ENCODE measurements at regions of chr11 and their contacts with region 1.

Region 1: DNA sequence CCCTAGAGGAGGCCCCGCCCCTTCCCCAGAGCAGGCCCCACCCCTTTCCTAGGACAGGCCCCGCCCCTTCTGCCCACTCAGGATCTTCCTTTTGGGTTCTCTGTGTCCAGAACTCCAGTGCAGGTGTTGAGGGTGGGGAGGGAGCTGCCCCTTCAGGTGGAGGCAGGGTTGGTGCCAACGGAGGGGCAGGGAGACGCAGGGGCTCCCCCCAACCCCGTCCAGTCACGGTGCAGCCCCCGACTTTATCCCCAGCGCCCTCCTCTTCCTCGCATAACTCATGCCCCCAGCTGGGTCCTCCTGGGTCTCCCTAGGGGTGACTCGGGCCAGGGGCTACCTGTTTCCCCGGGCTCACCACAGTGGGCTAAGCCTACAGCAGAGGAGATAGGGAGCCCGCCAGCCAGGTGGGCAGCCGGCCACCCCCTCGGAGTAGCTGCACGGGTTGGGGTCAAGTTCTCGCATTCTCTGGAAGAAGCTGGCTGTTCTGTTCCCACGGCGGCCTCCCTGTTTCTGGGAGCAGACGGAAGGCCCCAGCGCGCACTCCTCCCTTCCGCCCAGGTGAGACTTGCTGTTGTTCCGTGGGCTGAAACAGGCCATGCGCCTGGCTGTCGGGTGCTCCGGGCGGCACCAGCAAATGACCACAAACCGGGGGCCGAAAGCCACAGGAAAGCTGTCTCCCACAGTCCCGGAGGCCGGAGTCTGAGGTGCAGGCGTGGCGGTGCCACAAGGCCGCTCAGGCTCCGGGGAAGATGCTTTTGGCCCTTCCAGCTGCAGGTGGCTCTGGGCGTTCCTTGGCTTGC is 38.9 kb downstream of the MUC2 start:
- DNase-seq: no peak
- ATAC-seq: no peak
- H3K4me3 ChIP-seq: no peak overlapping the region
- H3K27ac ChIP-seq: 0 out of 2 replicates have a peak overlapping the region, but pooled peaks have one; percentile 11
- H3K4me1 ChIP-seq: no peaks in the 10 kb centered on the region
- H3K27me3 ChIP-seq: no peaks in the 10 kb centered on the region
- CTCF ChIP-seq: no peak

Region 2: GRCh38 chr11:1029654-1030053 is 83.9 kb before region 1 on chr11:
- CTCF ChIA-PET with region 1: no interaction called
- POLR2A ChIA-PET with region 1: no interaction called
- intact Hi-C with region 1: no loop called
- DNase-seq: no peak
- ATAC-seq: no peak
- H3K4me3 ChIP-seq: no peak overlapping the region
- H3K27ac ChIP-seq: no peak overlapping the region
- H3K4me1 ChIP-seq: no peaks in the 10 kb centered on the region
- H3K27me3 ChIP-seq: no peaks in the 10 kb centered on the region
- CTCF ChIP-seq: no peak

Region 3: DNA sequence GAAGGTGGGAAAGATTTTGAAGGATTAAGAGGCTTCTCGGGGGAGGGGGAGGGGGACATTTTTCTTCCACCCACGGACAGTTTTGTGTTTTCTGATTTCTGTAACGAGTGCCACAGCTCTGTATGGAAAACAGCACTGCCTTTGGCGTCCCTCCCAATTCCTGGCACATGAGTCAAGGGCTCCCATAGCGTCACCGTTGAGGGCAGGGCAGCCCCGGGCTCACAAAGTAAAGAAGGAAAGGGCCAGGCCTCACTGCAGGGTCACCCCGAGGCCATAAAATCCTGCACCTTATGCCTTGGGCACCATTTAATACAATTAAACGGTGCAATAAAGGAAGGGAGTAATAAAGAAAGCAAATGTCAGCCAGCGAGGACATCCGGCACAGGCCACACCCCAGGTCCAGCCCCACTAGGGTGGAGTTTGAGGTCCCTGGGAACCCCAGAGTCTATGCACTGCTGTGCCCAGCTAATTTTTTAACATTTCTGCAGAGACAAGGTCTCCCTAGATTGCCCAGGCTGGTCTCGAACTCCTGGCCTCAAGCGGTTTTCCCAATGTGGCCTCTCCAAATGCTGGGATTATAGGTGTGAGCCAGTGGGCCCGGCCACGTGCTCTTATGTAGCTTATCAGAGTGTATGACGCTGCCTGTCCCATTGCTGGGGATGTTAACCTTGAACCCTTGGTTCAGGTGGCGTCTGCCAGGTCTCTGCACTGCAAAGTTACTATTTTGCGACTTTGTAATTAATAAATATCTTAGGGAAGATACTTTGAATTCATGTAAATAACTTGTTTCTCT is 52.6 kb before region 1 on chr11:
- CTCF ChIA-PET with region 1: no interaction called
- POLR2A ChIA-PET with region 1: no interaction called
- intact Hi-C with region 1: no loop called
- DNase-seq: peak; percentile 98
- ATAC-seq: peak; percentile 95
- H3K4me3 ChIP-seq: no peak overlapping the region
- H3K27ac ChIP-seq: peak overlapping the region; percentile 100
- H3K4me1 ChIP-seq: peaks cover 19% of the 10 kb centered on the region
- H3K27me3 ChIP-seq: no peaks in the 10 kb centered on the region
- CTCF ChIP-seq: no peak

Region 4: DNA sequence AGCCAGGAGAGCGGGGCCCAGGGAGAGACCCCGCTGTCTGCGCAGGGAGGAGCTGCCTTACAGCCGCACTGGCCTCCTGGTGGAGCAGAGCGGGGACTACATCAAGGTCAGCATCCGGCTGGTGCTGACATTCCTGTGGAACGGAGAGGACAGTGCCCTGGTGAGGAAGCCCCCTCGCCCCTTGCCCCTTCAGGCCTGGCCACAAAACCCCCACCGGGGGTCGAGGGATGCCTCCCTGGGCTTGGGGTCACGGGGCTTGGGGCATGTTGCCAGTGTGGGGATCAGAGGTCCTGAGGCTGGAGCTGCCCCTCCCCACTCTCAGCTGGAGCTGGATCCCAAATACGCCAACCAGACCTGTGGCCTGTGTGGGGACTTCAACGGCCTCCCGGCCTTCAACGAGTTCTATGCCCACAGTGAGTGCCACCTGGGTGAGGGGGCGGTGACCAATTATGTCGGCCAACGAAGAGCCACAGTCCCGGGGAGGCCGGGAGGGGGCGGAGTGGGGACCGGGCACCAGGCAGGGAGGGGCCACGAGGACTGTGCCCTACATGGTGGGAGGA is 113.5 kb after region 1 on chr11:
- CTCF ChIA-PET with region 1: no interaction called
- POLR2A ChIA-PET with region 1: no interaction called
- intact Hi-C with region 1: loop called (anchors 5 kb)
- DNase-seq: no peak
- ATAC-seq: no peak
- H3K4me3 ChIP-seq: no peak overlapping the region
- H3K27ac ChIP-seq: no peak overlapping the region
- H3K4me1 ChIP-seq: peaks cover 16% of the 10 kb centered on the region; the same call in 1 of the 2 replicates
- H3K27me3 ChIP-seq: no peaks in the 10 kb centered on the region
- CTCF ChIP-seq: no peak

Region 5: GRCh38 chr11:1515082-1516060 is 401.8 kb after region 1 on chr11:
- CTCF ChIA-PET with region 1: no interaction called
- POLR2A ChIA-PET with region 1: no interaction called
- intact Hi-C with region 1: loop called (anchors 10 kb)
- DNase-seq: peak; percentile 71
- ATAC-seq: peak; percentile 96
- H3K4me3 ChIP-seq: no peak overlapping the region
- H3K27ac ChIP-seq: no peak overlapping the region
- H3K4me1 ChIP-seq: peaks cover 3% of the 10 kb centered on the region; the same call in 1 of the 2 replicates
- H3K27me3 ChIP-seq: no peaks in the 10 kb centered on the region
- CTCF ChIP-seq: peak; percentile 84

Measured in PC-3 (cell line).